Sciatic nerve (tissue), 2 donors: ENCODE measurements at regions of chr4 and their contacts with region 1.

Region 1: GRCh38 chr4:187618701-187619281 is 376.8 kb upstream of the ZFP42 start:
- DNase-seq: no peak
- ATAC-seq: no peak

Region 2: DNA sequence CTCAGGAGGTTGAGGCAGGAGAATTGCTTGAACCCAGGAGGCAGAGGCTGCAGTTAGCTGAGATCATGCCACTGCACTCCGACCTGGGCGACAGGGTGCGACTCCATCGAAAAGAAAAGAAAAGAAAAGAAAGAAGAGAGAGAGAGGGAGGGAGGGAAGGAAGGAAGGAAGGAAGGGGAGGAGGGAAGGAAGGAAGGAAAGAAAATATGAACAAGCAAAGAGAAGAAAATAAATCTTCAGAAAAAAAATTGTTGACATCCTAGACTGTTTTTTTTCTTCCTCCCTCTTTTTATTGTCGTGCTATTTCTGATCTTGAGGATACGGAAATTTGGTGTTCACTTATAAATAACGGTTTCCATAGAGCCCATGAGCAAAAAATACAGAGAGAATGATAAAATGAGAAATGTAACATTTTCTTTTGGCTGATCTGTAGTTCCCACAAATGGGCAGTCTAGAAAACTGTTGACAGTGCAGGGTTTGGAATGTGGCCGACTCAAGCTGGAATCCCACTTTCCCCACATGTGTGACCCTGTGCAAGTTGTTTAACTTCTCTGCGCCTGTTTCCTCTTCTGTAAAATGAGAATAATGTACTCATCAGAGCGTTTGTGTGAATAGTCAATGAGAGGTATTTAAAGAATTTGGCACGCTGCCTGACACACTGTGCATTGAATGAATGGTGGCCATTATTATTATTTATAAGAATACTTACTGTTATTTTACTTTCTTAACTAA is 1826.2 kb before region 1 on chr4:
- intact Hi-C with region 1: no loop called
- DNase-seq: no peak
- ATAC-seq: peak; percentile 54

Region 3: GRCh38 chr4:186335793-186336192 is 1283.0 kb before region 1 on chr4:
- intact Hi-C with region 1: loop called (anchors 5 kb)
- DNase-seq: no peak
- ATAC-seq: no peak